Right ventricle myocardium inferior (tissue), 1 donor: ENCODE measurements at regions of chr13 and their contacts with region 1.

Region 1: GRCh38 chr13:99269627-99270241 is 11.6 kb upstream of the GPR18 start:
- DNase-seq: no peak
- ATAC-seq: peak; percentile 72

Region 2: GRCh38 chr13:99087096-99087953 is 182.4 kb before region 1 on chr13:
- intact Hi-C with region 1: loop called (anchors 5 kb)
- DNase-seq: peak; percentile 94
- ATAC-seq: peak; percentile 97

Region 3: GRCh38 chr13:99176309-99177276 is 93.1 kb before region 1 on chr13:
- intact Hi-C with region 1: loop called (anchors 1 kb)
- DNase-seq: peak; percentile 77
- ATAC-seq: peak; percentile 78

Region 4: GRCh38 chr13:99199541-99200431 is 69.9 kb before region 1 on chr13:
- intact Hi-C with region 1: loop called (anchors 5 kb)
- DNase-seq: no peak
- ATAC-seq: peak; percentile 3

Region 5: GRCh38 chr13:99436686-99437416 is 167.1 kb after region 1 on chr13:
- intact Hi-C with region 1: loop called (anchors 2 kb)
- DNase-seq: peak; percentile 94
- ATAC-seq: peak; percentile 41